ENCODE measurements at regions of chr3 and their contacts with region 1.

Region 1: DNA sequence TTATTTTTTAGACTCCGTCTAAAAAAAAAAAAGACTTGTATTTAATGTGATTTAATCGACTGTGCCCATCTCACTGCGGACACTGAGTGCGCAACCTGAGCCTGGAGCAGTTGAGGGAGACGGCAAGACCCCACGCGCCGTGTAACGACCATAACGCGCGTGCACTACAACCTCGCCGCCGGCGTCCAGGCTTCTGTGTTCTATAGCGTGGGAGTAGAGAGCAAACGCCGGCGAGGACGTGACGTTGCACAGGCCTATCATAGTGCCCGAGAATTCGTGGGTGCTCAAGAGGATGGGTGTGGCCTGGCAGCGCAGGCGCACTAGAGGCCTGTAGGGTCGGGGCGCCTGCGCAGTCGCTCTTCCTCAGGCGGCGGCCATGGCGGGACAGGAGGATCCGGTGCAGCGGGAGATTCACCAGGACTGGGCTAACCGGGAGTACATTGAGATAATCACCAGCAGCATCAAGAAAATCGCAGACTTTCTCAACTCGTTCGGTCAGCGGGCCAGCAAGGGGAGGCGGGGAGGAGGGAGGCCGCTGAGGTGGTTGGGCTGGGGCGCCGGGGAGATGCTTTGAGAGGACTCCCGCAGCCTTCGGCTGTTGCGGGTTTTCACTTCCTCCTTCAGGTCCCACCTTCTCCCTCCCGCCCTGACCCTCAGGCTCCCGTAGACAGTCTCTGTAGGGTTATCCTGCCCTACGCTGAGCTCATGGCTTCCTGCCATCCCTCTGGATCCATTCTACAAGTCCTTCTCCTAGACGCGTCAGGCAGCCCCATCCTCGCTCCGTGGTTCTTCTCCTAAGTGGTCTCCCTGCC is at the start of gene BRK1:
- DNase-seq: peak; percentile 97
- H3K4me3 Mint-ChIP-seq: peak within 1 kb of the TSS; percentile 92
- H3K27ac Mint-ChIP-seq: peak within 1 kb of the TSS; percentile 94
- H3K4me1 Mint-ChIP-seq: peaks cover 31% of the 10 kb centered on the region
- H3K27me3 Mint-ChIP-seq: no peaks in the 10 kb centered on the region
- total RNA-seq, gene BRK1: 73.6 to 73.7 TPM

Region 2: GRCh38 chr3:9843715-9844438 is 271.7 kb before region 1 on chr3 and contains the start of gene RPUSD3:
- CTCF ChIA-PET with region 1: no interaction called
- intact Hi-C with region 1: loop called (anchors 2 kb)
- DNase-seq: peak; percentile 98
- H3K4me3 Mint-ChIP-seq: peak within 1 kb of the TSS; percentile 98
- H3K27ac Mint-ChIP-seq: peak within 1 kb of the TSS; percentile 89
- H3K4me1 Mint-ChIP-seq: peaks cover 30% of the 10 kb centered on the region
- H3K27me3 Mint-ChIP-seq: no peaks in the 10 kb centered on the region
- total RNA-seq, gene RPUSD3: 82.0 to 83.7 TPM

Region 3: DNA sequence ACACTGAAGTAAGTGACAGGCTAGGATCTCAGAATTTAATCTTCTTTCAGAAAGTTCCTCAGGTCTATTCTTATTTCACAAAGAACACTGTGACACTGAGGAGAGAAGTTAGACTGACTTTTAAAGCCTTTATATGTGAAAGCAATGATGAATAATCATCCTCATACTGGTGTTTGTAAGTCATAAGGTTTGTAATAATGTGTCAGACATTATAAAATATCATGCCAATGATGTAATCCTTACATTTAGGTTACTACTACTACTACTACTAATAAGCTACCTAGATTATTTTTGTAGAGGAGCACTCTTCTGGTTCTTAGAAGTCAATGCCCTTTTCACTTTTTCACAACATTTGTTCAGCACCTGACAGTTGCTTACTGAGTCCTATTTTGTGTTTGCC is 40.9 kb before region 1 on chr3:
- CTCF ChIA-PET with region 1: no interaction called
- intact Hi-C with region 1: no loop called
- DNase-seq: no peak
- H3K4me3 Mint-ChIP-seq: no peak overlapping the region
- H3K27ac Mint-ChIP-seq: no peak overlapping the region
- H3K4me1 Mint-ChIP-seq: no peaks in the 10 kb centered on the region
- H3K27me3 Mint-ChIP-seq: no peaks in the 10 kb centered on the region

Region 4: DNA sequence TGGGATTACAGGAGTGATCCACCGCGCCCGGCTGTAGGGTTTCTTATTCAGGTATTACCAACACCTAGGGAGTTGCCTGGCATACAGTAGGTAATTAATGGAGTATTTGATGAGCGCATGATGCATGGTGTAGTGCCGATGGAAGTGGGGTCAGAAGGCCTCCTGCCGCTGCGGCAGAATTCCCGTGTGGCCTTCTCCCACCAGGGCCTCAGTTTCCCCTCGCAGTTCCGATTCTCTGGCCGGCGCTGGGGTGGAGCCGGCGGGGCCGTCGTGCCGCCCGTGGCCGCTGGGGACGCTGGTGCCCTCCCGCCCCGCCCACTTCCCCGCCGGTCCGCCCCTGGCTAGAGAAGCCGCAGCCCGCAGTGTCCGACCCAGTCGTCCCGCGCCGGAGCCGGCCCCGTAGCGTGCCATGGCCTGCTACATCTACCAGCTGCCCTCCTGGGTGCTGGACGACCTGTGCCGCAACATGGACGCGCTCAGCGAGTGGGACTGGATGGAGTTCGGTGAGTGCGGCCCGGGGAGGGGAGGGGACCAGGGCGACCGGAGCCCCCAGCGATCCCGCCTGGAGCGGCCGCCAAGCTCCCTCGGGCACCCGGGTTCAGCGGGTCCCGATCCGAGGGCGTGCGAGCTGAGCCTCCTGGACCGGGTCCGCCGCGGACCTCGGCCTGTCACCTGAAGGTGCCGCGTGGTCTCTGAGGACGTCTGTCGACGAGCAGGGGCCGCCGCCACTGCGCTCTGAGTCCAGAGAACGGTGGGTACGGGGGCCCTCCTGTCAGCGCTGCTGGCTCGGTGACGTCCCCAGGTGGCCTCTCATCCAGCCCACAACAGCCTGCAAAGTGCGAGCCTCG is 49.2 kb after region 1 on chr3 and contains the start of gene IRAK2:
- CTCF ChIA-PET with region 1: interaction called, 5 read pairs
- intact Hi-C with region 1: loop called (anchors 2 kb)
- DNase-seq: peak; percentile 62
- H3K4me3 Mint-ChIP-seq: peak within 1 kb of the TSS; percentile 75
- H3K27ac Mint-ChIP-seq: no peak within 1 kb of the TSS
- H3K4me1 Mint-ChIP-seq: peaks cover 23% of the 10 kb centered on the region
- H3K27me3 Mint-ChIP-seq: no peaks in the 10 kb centered on the region
- total RNA-seq, gene IRAK2: 6.4 to 6.9 TPM

Region 5: DNA sequence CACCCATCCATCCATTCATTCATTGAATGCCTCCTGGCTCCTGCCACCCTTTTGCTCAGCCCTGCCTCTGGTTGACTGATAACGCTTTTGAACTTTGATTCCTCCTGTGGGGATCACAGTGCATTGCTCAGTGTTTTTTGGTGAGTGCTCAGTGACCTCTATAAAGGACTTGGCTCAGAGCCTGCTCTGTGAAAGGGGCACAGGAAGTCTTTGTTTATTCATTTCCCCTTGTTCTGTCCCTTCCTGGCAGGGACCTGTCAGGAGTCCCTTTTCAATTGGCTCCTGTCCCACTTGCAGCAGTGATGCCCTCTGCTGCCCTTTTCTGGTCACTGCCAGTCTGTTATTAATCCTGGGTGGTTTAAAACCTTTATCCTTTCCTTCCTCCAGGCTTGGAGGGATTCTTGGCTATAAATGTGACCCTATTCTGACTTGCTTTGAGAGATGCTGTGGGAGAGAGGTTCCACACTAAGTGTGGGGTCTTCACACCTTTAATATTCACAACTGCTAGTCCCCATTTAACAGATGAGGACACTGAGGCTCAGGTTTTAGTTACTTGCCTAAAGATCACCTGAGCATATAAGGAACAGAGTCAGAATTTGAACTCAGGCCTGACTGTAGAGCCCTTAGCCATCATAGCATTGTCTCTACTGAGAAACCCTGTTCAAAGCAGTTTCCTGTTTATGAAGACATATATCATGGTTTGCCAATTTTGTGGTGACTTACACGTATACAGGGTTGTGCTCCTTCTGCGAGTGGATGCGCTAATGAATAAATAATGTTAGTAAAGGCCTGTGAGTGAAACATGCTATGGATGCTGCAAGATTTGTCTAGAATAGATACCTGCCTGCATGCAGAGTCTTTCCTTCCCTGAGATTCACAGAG is 109.5 kb after region 1 on chr3:
- CTCF ChIA-PET with region 1: interaction called, 3 read pairs
- intact Hi-C with region 1: loop called (anchors 1 kb)
- DNase-seq: peak; percentile 88
- H3K4me3 Mint-ChIP-seq: no peak overlapping the region
- H3K27ac Mint-ChIP-seq: peak overlapping the region; percentile 79
- H3K4me1 Mint-ChIP-seq: peaks cover 58% of the 10 kb centered on the region
- H3K27me3 Mint-ChIP-seq: no peaks in the 10 kb centered on the region

Region 6: GRCh38 chr3:10322352-10322710 is 206.8 kb after region 1 on chr3:
- CTCF ChIA-PET with region 1: interaction called, 5 read pairs
- intact Hi-C with region 1: loop called (anchors 1 kb)
- DNase-seq: peak; percentile 29
- H3K4me3 Mint-ChIP-seq: no peak overlapping the region
- H3K27ac Mint-ChIP-seq: no peak overlapping the region
- H3K4me1 Mint-ChIP-seq: peaks cover 23% of the 10 kb centered on the region
- H3K27me3 Mint-ChIP-seq: peaks cover 1% of the 10 kb centered on the region

Measured in activated naive CD4-positive, alpha-beta T cell treated with anti-CD3 and anti-CD28 coated beads for 36 hours (primary cell).